Sigmoid colon (tissue), 7 donors: ENCODE measurements at regions of chr1 and their contacts with region 1.

Region 1: DNA sequence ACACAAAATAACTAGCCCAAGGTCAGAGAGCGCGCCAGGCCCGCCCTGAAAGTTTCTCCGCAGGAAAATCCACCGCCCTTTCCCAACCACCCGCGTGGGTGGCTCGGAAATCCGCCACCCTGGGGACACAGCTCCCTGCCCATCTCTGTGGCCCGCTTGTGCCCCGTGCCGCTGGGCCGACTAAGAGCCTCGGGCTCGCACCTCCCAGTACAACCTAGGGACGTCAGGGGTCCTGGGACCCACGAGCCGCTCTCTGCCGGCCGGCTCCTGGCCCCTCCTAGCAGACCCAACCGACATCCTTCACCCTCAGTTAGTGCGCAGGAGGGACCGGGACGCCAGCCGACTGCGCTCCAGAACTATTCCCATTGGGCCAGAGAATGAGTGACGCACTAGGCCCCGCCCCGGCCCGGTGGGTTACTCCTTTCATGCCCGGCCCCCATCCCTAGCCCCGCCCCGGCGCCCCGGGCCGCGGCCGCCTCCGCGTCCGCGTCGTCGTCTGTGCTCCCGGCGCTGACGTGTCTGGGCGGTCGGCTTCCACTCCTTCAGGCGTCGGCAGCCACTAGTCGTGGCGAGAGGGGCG is 395 bp upstream of the UAP1 start:
- DNase-seq: peak; percentile 100
- H3K4me3 ChIP-seq: peak overlapping the region; percentile 68 to 93 (median 72)
- H3K27ac ChIP-seq: peak overlapping the region; percentile 89 to 98 (median 96)
- H3K4me1 ChIP-seq: peaks cover 0 to 29% (median 17%) of the 10 kb centered on the region in 4 donors
- H3K27me3 ChIP-seq: no peaks in the 10 kb centered on the region
- CTCF ChIP-seq: no peak
- EP300 ChIP-seq: peak in 1 of 4 donors; percentile 54
- POLR2A ChIP-seq: peak; percentile 71 to 87

Region 2: GRCh38 chr1:162040681-162041080 is 520.4 kb before region 1 on chr1:
- intact Hi-C with region 1: no loop called
- DNase-seq: no peak
- H3K4me3 ChIP-seq: no peak overlapping the region
- H3K27ac ChIP-seq: no peak overlapping the region
- H3K4me1 ChIP-seq: peaks cover 0 to 9% (median 0%) of the 10 kb centered on the region in 4 donors
- H3K27me3 ChIP-seq: no peaks in the 10 kb centered on the region
- CTCF ChIP-seq: no peak
- EP300 ChIP-seq: no peak
- POLR2A ChIP-seq: no peak

Region 3: DNA sequence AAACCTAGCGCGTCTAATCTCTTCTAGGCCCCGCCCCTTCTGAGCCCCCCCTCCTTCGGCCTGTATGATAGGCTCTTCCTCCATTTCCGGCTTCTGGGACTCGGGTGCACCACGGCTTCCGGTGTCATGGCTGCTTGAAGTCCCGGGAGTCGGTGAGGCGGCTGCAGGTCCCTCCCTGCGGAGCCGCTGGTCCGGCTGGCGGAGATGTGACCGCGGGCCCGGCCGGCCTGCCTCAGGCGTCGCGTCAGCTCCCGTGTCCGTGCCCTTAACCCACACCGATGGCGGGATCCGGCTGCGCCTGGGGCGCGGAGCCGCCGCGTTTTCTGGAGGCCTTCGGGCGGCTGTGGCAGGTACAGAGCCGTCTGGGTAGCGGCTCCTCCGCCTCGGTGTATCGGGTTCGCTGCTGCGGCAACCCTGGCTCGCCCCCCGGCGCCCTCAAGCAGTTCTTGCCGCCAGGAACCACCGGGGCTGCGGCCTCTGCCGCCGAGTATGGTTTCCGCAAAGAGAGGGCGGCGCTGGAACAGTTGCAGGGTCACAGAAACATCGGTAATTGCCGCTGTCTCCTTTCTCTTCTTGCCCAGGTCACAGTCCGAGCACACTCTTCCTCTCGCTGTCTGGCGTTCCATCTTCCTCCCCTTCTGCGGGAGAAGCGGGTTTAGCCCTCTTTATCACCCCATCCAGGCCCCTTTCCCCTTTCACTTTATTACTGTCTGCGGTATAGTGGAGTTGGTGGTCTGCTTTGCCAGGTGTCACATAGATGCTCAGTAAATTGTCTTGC is 63.2 kb before region 1 on chr1 and contains the start of gene UHMK1:
- intact Hi-C with region 1: loop called (anchors 10 kb)
- DNase-seq: peak; percentile 96
- H3K4me3 ChIP-seq: peak within 1 kb of the TSS; percentile 75 to 98 (median 88)
- H3K27ac ChIP-seq: peak within 1 kb of the TSS; percentile 85 to 90 (median 89)
- H3K4me1 ChIP-seq: peaks cover 0 to 32% (median 26%) of the 10 kb centered on the region in 4 donors
- H3K27me3 ChIP-seq: no peaks in the 10 kb centered on the region
- CTCF ChIP-seq: no peak
- EP300 ChIP-seq: no peak
- POLR2A ChIP-seq: peak; percentile 25 to 43
- total RNA-seq, gene UHMK1: 24.9 to 34.6 (median 28.8) TPM

Region 4: DNA sequence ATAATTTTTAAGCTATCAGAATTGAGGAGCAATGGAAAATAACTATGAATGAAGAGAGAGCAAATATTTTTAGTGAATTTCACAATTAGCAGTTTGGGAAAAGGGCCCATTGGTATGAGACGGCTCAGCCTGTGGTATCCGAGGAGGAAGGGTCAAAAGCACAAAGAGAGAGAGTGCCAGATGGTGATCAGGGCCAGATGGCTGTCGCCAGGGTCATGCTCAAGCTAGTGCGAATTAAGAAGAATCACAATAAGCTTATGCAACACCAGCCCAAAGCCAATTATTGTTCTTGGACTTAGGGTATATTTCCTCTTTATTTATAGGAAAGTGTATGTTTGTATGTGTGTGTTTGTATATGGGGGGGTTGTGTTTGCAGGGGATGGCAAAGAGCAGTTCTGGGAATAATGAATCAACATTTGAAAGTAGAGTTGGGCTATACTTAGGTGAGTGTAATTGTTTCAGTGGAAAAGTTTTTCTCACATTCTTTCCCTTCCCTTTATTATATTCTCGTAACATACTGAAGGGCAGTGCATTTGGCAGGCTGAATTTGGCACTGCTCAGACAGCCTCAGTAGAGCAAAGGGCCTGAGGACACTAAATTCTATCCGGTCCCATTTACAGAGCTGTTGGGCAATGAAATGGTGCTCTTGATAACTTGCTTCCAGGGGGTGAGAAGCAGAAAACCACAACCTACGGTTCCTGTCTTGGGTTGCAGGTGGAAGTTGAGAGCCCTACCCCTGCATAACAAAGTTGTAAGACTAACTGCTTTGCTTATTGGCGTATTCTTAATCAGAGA is 51.7 kb after region 1 on chr1:
- intact Hi-C with region 1: loop called (anchors 5 kb)
- DNase-seq: peak; percentile 78
- H3K4me3 ChIP-seq: no peak overlapping the region
- H3K27ac ChIP-seq: peak overlapping the region; percentile 76 to 80 (median 78)
- H3K4me1 ChIP-seq: peaks cover 0 to 17% (median 16%) of the 10 kb centered on the region in 4 donors
- H3K27me3 ChIP-seq: no peaks in the 10 kb centered on the region
- CTCF ChIP-seq: no peak
- EP300 ChIP-seq: no peak
- POLR2A ChIP-seq: no peak

Region 5: GRCh38 chr1:162689745-162690671 is 128.9 kb after region 1 on chr1:
- intact Hi-C with region 1: loop called (anchors 10 kb)
- DNase-seq: no peak
- H3K4me3 ChIP-seq: no peak overlapping the region
- H3K27ac ChIP-seq: peak overlapping the region; percentile 78 to 90 (median 88)
- H3K4me1 ChIP-seq: peaks cover 3 to 98% (median 91%) of the 10 kb centered on the region in 4 donors
- H3K27me3 ChIP-seq: no peaks in the 10 kb centered on the region
- CTCF ChIP-seq: no peak
- EP300 ChIP-seq: no peak
- POLR2A ChIP-seq: no peak